ENCODE measurements at regions of chr3 and their contacts with region 1.

Region 1: DNA sequence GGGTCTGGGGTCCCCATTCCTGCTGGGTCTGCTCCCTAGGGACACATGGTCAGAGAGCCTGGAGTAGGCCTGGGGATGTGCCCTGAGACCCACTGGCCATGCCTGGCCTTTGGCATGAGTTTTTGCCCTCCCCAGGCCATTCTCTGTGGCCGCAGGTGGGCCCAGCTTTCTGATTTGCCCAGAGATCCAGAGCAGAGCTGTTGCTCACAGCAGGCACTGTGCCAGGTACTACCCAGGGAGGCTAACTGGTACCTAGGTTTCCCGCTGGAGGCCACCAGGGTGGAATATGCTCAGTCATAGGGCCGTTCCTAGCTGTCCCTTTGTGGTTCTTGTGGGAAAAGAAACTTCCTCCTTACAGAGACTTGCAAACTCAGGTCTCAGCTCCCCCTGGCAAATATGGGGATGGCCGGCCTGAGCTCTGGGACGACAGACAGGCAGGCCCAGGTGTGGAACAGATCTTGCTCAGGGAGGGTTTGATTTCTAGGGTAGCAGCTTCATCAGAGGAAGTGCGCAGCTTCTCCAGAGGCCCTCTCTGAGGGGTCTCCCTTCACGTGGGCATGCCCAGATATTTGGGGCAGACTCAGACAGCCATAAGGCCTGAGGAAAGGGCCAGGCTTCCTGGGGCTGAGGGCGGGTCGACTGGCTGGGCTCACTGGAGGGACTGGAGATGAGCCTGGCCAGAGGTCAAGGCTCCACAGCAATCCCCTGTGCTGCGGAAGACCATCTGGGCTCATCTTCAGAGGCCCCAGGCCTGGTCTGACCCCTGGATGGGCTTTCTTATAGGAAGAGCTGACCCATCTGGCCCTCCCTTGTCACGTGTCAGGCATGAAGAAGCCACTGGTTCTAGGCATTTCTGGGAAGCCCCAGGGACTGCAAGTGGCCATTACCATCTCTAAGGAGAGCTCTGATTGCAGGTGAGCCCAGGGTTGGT is 28.0 kb downstream of the ACAA1 start:
- DNase-seq: no peak
- ATAC-seq: no peak
- H3K4me3 ChIP-seq: no peak overlapping the region
- H3K27ac ChIP-seq: no peak overlapping the region
- H3K4me1 ChIP-seq: no peaks in the 10 kb centered on the region
- H3K27me3 ChIP-seq: no peaks in the 10 kb centered on the region
- CTCF ChIP-seq: no peak

Region 2: GRCh38 chr3:38151667-38152275 is 42.9 kb after region 1 on chr3:
- CTCF ChIA-PET with region 1: no interaction called
- POLR2A ChIA-PET with region 1: no interaction called
- intact Hi-C with region 1: no loop called
- DNase-seq: peak; percentile 87
- ATAC-seq: peak; percentile 64
- H3K4me3 ChIP-seq: no peak overlapping the region
- H3K27ac ChIP-seq: peak overlapping the region; percentile 96
- H3K4me1 ChIP-seq: peaks cover 46% of the 10 kb centered on the region
- H3K27me3 ChIP-seq: no peaks in the 10 kb centered on the region
- CTCF ChIP-seq: no peak

Region 3: GRCh38 chr3:38214560-38214959 is 105.6 kb after region 1 on chr3:
- CTCF ChIA-PET with region 1: no interaction called
- POLR2A ChIA-PET with region 1: interaction called, 19 read pairs
- intact Hi-C with region 1: no loop called
- DNase-seq: peak; percentile 7
- ATAC-seq: peak; percentile 61
- H3K4me3 ChIP-seq: no peak overlapping the region
- H3K27ac ChIP-seq: no peak overlapping the region
- H3K4me1 ChIP-seq: no peaks in the 10 kb centered on the region
- H3K27me3 ChIP-seq: no peaks in the 10 kb centered on the region
- CTCF ChIP-seq: no peak